Sciatic nerve (tissue), 2 donors: ENCODE measurements at regions of chr12 and their contacts with region 1.

Region 1: GRCh38 chr12:92987362-92987761 is 58.3 kb upstream of the EEA1 start:
- DNase-seq: no peak
- ATAC-seq: peak; percentile 93

Region 2: GRCh38 chr12:91883781-91884180 is 1103.6 kb before region 1 on chr12:
- intact Hi-C with region 1: loop called (anchors 5 kb)
- DNase-seq: no peak
- ATAC-seq: no peak

Region 3: GRCh38 chr12:93390549-93391297 is 403.4 kb after region 1 on chr12:
- intact Hi-C with region 1: loop called (anchors 10 kb)
- DNase-seq: no peak
- ATAC-seq: no peak